Esophagus squamous epithelium (tissue), 5 donors: ENCODE measurements at regions of chr20 and their contacts with region 1.

Region 1: DNA sequence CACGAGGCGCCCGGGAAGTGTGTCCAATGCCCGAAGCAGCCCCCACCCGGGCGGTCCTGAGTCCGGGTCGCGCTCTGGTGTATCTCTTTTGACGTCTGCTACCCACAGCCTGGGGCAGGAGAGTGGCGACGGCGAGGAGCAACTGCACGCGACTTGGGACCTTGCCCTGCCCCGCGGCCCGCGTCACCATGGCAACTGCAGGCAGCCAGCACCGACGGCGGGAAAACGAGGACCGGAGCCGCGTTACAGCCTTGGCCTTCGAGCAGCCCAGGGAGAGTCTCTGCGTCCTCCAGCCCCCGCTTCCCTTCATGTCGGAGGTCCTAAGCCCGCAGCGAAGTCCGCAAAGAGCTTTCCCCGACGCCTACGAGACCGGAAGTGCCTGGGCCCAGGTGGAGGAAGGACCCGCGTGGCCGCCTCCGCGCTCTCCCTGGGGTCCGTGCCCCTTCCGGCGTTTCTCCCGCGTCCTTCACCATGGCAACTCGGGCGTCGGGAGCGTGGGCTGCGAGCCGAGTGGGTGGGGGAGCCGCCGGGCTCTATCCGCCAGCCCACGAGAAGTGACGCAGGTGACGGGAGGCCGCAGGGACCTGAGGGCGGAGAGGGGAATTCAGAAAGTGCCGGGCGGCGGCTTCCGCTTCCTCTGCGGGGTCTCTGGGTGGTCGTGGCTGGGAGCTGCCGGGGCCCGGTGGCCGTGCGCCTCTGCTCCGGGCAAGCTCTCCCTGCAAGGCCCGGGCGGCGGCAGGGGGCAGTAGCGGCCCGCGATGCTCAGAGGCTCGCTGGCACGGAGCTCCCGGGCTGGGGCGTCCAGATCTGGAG is 88.6 kb upstream of the TGM3 start:
- DNase-seq: no peak
- H3K4me3 ChIP-seq: peak overlapping the region; percentile 44 to 78 (median 62)
- H3K27ac ChIP-seq: peak overlapping the region in 3 of 4 donors; percentile 49 to 84 (median 71)
- H3K4me1 ChIP-seq: peaks cover 9 to 39% (median 10%) of the 10 kb centered on the region in 3 donors
- H3K27me3 ChIP-seq: peaks cover 0 to 50% (median 0%) of the 10 kb centered on the region in 4 donors
- CTCF ChIP-seq: peak; percentile 59 to 87 (median 78)
- POLR2A ChIP-seq: no peak

Region 2: GRCh38 chr20:2005831-2006426 is 201.2 kb before region 1 on chr20:
- intact Hi-C with region 1: no loop called
- DNase-seq: no peak
- H3K4me3 ChIP-seq: no peak overlapping the region
- H3K27ac ChIP-seq: no peak overlapping the region
- H3K4me1 ChIP-seq: no peaks in the 10 kb centered on the region
- H3K27me3 ChIP-seq: peaks cover 0 to 77% (median 0%) of the 10 kb centered on the region in 4 donors
- CTCF ChIP-seq: no peak
- POLR2A ChIP-seq: no peak

Region 3: GRCh38 chr20:2349818-2350508 is 142.8 kb after region 1 on chr20:
- intact Hi-C with region 1: loop called (anchors 5 kb)
- DNase-seq: no peak
- H3K4me3 ChIP-seq: no peak overlapping the region
- H3K27ac ChIP-seq: no peak overlapping the region
- H3K4me1 ChIP-seq: peaks cover 0 to 8% (median 0%) of the 10 kb centered on the region in 3 donors
- H3K27me3 ChIP-seq: peaks cover 0 to 28% (median 0%) of the 10 kb centered on the region in 4 donors
- CTCF ChIP-seq: no peak
- POLR2A ChIP-seq: no peak

Region 4: GRCh38 chr20:2451939-2452732 is 245.0 kb after region 1 on chr20:
- intact Hi-C with region 1: loop called (anchors 10 kb)
- DNase-seq: no peak
- H3K4me3 ChIP-seq: no peak overlapping the region
- H3K27ac ChIP-seq: peak overlapping the region in 2 of 4 donors; percentile 28 to 32
- H3K4me1 ChIP-seq: peaks cover 4 to 26% (median 6%) of the 10 kb centered on the region in 3 donors
- H3K27me3 ChIP-seq: no peaks in the 10 kb centered on the region
- CTCF ChIP-seq: peak; percentile 56 to 89 (median 76)
- POLR2A ChIP-seq: no peak